ENCODE measurements at regions of chr17 and their contacts with region 1.

Region 1: DNA sequence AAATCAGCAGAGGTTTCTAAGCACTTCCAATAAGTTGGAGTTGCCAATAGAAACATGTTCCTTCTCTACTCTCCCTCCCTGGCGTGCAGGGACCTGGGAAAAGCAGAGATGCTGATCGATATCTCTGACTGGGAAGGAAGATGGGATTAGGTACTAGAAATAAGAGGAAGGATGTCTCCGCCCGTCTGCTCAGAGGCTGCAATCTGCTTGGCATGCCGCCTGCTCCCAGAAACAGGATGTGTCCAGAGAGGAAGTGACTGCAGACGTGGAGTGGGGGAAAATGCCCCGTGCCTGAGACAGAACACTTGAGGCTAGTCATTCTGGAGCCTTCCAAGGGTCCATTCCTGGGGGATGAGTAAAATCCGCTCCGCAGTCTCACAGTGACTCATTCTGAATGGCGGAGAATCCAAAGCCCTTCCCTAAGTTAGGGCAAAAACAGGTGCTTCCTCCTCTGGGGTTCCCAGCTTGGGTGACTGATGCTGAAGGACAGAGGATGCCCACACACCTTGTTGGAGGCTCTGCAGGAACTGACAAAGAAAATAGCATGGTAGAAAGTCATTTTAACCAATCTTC is 45.0 kb upstream of the SMURF2 start:
- DNase-seq: peak; percentile 100
- H3K4me3 ChIP-seq: peak overlapping the region in 2 of 3 experiments; percentile 12 to 29
- H3K27ac ChIP-seq: peak overlapping the region; percentile 95
- H3K4me1 ChIP-seq: peaks cover 39% of the 10 kb centered on the region
- H3K27me3 ChIP-seq: no peaks in the 10 kb centered on the region
- CTCF ChIP-seq: no peak

Region 2: DNA sequence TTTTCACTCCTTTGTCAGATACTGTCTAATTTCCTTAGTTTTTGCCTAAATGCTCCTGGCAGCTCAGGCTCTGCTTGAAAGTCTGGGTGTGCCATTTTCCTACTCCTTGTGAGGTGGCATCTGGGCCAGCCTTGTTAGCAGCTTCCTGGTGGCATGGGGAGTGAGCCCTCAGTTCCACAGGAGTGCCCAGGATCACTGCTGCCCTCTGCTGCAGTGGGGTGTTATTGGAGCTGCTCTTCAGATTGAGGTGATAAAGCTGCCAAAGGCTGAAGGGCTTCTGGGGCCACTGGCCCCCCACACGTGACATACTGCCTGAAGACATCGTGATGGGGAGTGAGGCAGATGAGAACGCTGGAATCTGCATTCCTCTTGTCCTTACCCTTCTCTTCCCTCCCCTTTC is 172.9 kb before region 1 on chr17:
- CTCF ChIA-PET with region 1: no interaction called
- dilution Hi-C with region 1: no loop called
- in situ Hi-C with region 1: no loop called
- intact Hi-C with region 1: no loop called
- DNase-seq: no peak
- H3K4me3 ChIP-seq: no peak overlapping the region
- H3K27ac ChIP-seq: no peak overlapping the region
- H3K4me1 ChIP-seq: no peaks in the 10 kb centered on the region
- H3K27me3 ChIP-seq: no peaks in the 10 kb centered on the region
- CTCF ChIP-seq: peak in 1 of 2 donors; percentile 38

Region 3: GRCh38 chr17:64580384-64581315 is 126.5 kb before region 1 on chr17:
- CTCF ChIA-PET with region 1: no interaction called
- dilution Hi-C with region 1: no loop called
- in situ Hi-C with region 1: no loop called
- intact Hi-C with region 1: no loop called
- DNase-seq: no peak
- H3K4me3 ChIP-seq: no peak overlapping the region
- H3K27ac ChIP-seq: no peak overlapping the region
- H3K4me1 ChIP-seq: no peaks in the 10 kb centered on the region
- H3K27me3 ChIP-seq: no peaks in the 10 kb centered on the region
- CTCF ChIP-seq: no peak

Region 4: GRCh38 chr17:64679688-64680216 is 27.4 kb before region 1 on chr17:
- CTCF ChIA-PET with region 1: no interaction called
- dilution Hi-C with region 1: no loop called
- in situ Hi-C with region 1: no loop called
- intact Hi-C with region 1: loop called (anchors 1 kb)
- DNase-seq: peak; percentile 98
- H3K4me3 ChIP-seq: no peak overlapping the region
- H3K27ac ChIP-seq: peak overlapping the region; percentile 87
- H3K4me1 ChIP-seq: peaks cover 28% of the 10 kb centered on the region
- H3K27me3 ChIP-seq: no peaks in the 10 kb centered on the region
- CTCF ChIP-seq: no peak

Region 5: DNA sequence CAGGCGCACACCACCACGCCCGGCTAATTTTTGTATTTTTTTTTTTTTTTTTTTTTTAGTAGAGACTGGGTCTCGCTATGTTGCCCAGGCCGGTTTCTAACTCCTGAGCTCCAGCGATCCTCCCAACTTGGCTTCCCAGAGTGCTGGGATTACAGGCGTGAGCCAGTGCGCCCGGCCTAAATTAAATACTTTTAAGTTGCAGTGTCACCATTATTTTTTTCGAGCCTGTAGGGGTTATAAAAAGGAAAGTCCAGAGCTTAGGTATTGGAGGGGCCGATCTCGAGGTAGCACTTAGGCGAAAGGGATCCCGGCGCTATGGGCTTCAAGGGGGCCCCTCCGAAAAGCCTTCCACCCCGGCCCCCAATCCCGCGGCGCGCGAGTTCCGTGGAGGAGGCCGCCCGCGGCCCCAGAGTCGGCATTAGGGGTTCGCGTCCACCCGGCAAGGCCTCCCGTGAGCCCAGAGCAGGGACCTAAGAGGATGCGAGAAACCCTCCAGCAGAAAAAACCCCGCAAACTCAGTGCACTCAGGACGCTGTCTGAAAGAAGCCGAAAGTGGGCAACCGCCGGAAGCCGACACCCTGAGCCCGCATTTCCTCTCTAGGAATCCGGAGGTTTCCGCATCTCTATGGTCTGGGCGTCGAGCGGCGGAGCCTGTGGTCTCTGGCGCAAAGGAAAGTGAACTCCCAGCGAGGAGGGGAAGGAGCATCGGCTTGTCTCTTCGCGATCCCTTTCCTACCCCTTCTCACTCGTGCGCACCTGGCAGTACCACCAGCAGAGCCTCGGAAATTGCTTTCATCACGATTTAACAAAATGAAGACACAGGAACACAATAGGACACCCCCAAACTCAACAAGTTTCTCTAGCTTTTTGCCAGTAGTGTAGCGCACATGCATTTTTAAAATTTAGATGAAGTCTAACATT is 416.0 kb after region 1 on chr17:
- CTCF ChIA-PET with region 1: interaction called, 12 read pairs
- dilution Hi-C with region 1: no loop called
- in situ Hi-C with region 1: no loop called
- intact Hi-C with region 1: no loop called
- DNase-seq: peak; percentile 81
- H3K4me3 ChIP-seq: peak overlapping the region; percentile 50 to 70 (median 65)
- H3K27ac ChIP-seq: peak overlapping the region; percentile 65
- H3K4me1 ChIP-seq: peaks cover 12% of the 10 kb centered on the region
- H3K27me3 ChIP-seq: no peaks in the 10 kb centered on the region
- CTCF ChIP-seq: no peak

Measured in mammary epithelial cell (primary cell).